ENCODE measurements at regions of chr11 and their contacts with region 1.

Region 1: DNA sequence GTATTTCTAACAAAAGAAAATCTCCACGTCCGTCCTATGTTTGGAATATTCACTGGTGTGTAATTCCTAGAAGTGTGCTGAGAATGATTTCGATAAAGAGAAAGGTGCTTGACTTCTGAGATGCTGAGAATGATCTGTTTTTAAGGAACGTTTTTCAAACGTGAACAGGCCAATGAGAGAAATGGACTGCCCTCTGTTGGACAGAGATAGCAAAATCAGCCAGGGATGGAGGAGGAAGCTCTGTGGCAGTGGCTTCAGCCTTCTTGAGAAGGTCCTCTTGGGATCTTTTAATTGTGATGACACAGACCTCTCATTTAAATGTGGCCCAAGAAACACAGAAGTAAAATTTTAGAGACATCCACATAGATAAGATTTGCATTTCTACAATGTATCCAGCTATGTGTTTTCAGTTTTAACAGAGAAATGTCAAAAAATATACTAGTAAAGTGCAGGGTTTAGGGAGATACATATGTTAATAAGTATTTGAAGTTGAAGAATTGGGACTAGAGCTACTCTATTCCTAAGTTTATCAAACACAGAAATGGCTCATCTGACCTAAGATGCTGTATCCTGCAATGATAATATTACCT is 84.0 kb upstream of the RCN1 start:
- DNase-seq: peak; percentile 71
- ATAC-seq: peak; percentile 55
- H3K4me3 ChIP-seq: no peak overlapping the region
- H3K27ac ChIP-seq: no peak overlapping the region
- H3K4me1 ChIP-seq: peaks cover 15% of the 10 kb centered on the region
- H3K27me3 ChIP-seq: peaks cover 40% of the 10 kb centered on the region
- CTCF ChIP-seq: peak; percentile 79

Region 2: DNA sequence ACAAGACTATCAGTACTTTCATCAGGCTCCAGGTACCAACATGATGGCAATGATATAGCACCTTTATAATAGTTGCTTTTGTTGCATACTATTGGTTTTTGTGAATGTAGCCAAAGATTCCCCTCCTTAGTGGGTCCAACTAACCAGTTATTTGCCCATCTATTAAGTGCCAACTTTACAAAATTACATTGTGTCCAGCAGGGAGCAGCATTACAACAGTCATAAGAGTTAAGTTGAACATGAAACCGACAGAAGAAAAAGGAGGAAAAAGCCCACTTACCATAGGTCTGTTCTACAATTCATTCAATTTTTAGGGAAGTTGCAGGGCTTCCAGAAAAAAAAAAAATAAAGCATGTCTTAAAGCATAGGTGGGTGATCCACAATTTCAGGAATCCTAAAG is 519.0 kb before region 1 on chr11:
- CTCF ChIA-PET with region 1: no interaction called
- POLR2A ChIA-PET with region 1: no interaction called
- intact Hi-C with region 1: loop called (anchors 5 kb)
- DNase-seq: peak; percentile 70
- ATAC-seq: peak; percentile 59
- H3K4me3 ChIP-seq: no peak overlapping the region
- H3K27ac ChIP-seq: no peak overlapping the region
- H3K4me1 ChIP-seq: no peaks in the 10 kb centered on the region
- H3K27me3 ChIP-seq: no peaks in the 10 kb centered on the region
- CTCF ChIP-seq: peak; percentile 72

Measured in PC-3 (cell line).